Heart right ventricle (tissue), 16 donors: ENCODE measurements at regions of chr3 and their contacts with region 1.

Region 1: DNA sequence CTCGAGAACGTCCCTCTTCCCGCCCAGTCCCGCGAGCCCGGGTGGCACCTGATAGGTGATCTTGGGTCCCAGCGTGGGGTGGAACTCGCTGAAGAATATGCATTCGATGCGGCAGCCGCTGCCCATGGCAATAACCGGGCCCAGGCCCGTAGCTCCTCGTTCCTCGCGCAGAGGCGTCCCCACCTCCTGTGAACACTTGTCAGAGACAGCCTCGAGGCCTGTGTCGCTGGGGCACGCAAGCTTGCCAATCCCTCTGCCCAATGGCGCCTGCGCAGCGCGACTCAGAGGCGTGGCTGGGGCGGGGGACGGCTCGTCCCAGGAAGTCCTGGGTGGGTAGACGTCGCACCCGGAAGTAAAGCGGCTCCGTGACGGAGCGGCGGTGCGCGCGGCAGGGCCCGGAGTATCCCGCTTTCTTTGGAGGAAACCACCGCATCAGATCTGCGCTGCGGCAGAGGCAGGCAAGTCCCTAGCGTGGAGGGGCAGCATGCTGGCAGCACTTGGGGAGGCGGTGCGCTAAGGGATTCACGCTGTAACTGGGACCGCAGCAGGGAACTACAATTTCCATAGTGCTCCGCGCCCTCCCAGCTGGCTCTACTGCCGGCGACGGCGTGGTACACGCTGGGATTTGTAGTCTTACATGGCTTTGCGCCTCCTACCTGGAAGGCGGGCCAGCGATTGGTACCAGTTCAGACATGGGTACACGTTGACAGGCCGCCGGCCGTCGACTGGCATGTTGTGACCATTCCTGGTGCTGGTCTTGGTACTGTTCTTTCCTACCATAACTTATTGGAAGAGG is at the starts of genes CYB561D2 and NPRL2:
- DNase-seq: peak; percentile 96 to 98
- ATAC-seq: peak; percentile 94 to 97 (median 96)
- H3K4me3 ChIP-seq: peak within 1 kb of the TSS; percentile 42 to 89 (median 72)
- H3K27ac ChIP-seq: peak within 1 kb of the TSS; percentile 84 to 97 (median 92)
- H3K4me1 ChIP-seq: peaks cover 21 to 63% (median 42%) of the 10 kb centered on the region in 9 donors
- H3K27me3 ChIP-seq: no peaks in the 10 kb centered on the region
- CTCF ChIP-seq: no peak
- total RNA-seq, gene CYB561D2: 3.9 to 10.9 (median 5.6) TPM
- total RNA-seq, gene NPRL2: 13.0 to 23.6 (median 16.3) TPM

Region 2: DNA sequence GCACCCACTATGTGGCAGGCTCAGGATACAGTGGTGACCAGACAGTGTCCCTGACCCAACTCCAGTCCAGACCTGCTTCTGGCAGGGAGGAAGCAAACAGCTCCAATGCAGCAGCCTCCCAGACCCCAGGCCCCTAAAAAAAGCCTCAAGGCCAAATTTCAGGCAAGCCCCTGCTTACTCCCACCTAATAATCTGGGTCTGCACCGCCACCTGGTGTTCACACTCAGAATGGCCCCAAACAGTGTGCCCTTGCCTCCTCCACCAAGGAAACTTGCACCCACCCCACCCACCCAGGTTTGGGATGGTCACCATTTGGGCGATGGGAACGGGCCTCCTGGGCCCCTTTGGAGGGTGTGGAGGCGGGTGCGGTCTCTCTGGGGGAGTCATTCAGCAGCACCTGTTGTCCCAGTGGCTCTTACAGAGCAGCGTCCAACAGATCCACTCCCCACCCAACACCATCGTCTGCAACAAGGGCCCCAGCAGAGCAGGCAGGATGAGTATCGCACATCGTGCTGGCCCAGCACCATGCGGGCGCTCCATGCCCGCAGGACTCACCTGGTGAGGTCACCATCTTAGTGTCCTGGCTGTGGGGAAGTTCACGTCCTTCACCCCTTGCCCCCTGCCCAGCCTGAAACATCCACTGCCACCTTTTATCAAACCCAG is 199.5 kb after region 1 on chr3:
- intact Hi-C with region 1: loop called in 1 of 10 experiments (anchors 5 kb)
- DNase-seq: peak; percentile 54 to 57
- ATAC-seq: peak; percentile 14 to 69 (median 50)
- H3K4me3 ChIP-seq: no peak overlapping the region
- H3K27ac ChIP-seq: no peak overlapping the region
- H3K4me1 ChIP-seq: no peaks in the 10 kb centered on the region
- H3K27me3 ChIP-seq: no peaks in the 10 kb centered on the region
- CTCF ChIP-seq: peak; percentile 63 to 85 (median 82)

Region 3: DNA sequence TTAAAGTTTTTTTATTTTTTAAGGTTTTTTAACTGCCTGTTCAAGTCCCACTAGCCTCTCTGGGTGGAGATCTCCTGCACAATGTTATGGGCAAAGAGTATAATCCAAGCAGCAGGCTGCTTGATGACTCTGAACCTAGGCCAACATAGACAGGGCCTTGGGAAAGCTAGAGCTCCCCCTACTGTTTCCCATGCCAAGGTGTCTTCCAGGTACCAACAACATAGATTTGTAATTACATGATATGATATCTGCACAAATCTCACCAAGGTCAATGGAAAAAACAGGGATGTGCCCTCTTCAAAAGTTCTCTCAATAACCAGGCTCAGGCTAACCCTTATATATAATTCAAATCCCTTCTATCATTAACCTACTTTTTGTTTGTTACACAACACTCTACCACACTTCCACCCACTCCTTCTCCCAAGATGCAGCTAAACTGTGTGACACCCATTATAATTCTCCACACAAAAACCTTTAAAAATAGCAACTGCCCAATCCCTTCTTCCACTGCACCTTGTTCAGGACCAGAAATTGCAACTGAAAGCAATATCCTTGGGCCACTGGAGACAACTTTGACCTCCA is 1084.1 kb after region 1 on chr3:
- intact Hi-C with region 1: loop called in 1 of 10 experiments (anchors 10 kb)
- DNase-seq: peak in 1 of 2 donors; percentile 37
- ATAC-seq: peak in 7 of 8 donors; percentile 55 to 81 (median 70)
- H3K4me3 ChIP-seq: no peak overlapping the region
- H3K27ac ChIP-seq: no peak overlapping the region
- H3K4me1 ChIP-seq: peaks cover 0 to 6% (median 0%) of the 10 kb centered on the region in 9 donors
- H3K27me3 ChIP-seq: no peaks in the 10 kb centered on the region
- CTCF ChIP-seq: peak; percentile 46 to 82 (median 64)